Prostate gland (tissue), 2 donors: ENCODE measurements at regions of chr16 and their contacts with region 1.

Region 1: DNA sequence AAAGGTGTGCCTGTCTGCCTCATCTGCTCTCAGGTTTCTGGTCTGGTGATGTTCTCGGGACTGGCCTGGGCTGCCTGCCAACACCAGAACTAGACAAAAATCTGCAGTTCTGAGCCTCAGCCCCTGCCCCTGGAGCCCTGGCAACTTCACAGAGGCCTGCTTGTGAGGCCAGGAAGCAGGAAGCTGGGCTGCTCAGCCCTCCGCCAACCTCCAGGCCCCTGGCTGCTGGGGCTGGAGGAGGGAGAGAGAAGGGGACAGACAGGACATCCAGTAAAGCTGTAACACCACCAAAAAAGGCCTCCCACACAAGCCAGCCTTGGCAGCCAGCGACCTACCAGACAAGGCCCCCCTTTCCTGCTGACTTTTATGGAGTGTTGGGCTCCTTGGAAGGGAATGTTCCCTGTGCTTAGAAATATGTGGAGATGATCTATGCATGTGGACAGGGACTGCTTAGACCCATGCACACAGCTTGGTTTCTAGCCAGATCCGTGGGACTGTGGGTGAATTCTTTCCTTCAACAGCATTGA is 157.6 kb downstream of the XYLT1 start:
- DNase-seq: peak; percentile 73
- H3K4me3 ChIP-seq: no peak overlapping the region
- H3K27ac ChIP-seq: peak overlapping the region; percentile 82 to 86
- H3K4me1 ChIP-seq: peaks cover 9% of the 10 kb centered on the region
- H3K27me3 ChIP-seq: no peaks in the 10 kb centered on the region
- CTCF ChIP-seq: no peak
- POLR2A ChIP-seq: no peak

Region 2: GRCh38 chr16:17404941-17405689 is 92.0 kb after region 1 on chr16:
- intact Hi-C with region 1: loop called (anchors 10 kb)
- DNase-seq: no peak
- H3K4me3 ChIP-seq: no peak overlapping the region
- H3K27ac ChIP-seq: peak overlapping the region; percentile 18 to 42
- H3K4me1 ChIP-seq: no peaks in the 10 kb centered on the region
- H3K27me3 ChIP-seq: no peaks in the 10 kb centered on the region
- CTCF ChIP-seq: no peak
- POLR2A ChIP-seq: no peak